Mammary epithelial cell (primary cell): ENCODE measurements at regions of chr3 and their contacts with region 1.

Region 1: GRCh38 chr3:98718521-98719129 is 44.5 kb upstream of the ST3GAL6 start:
- DNase-seq: no peak
- H3K4me3 ChIP-seq: no peak overlapping the region
- H3K27ac ChIP-seq: no peak overlapping the region
- H3K4me1 ChIP-seq: no peaks in the 10 kb centered on the region
- H3K27me3 ChIP-seq: no peaks in the 10 kb centered on the region
- CTCF ChIP-seq: no peak

Region 2: GRCh38 chr3:98259707-98260106 is 458.9 kb before region 1 on chr3:
- CTCF ChIA-PET with region 1: no interaction called
- dilution Hi-C with region 1: no loop called
- in situ Hi-C with region 1: no loop called
- intact Hi-C with region 1: no loop called
- DNase-seq: no peak
- H3K4me3 ChIP-seq: no peak overlapping the region
- H3K27ac ChIP-seq: no peak overlapping the region
- H3K4me1 ChIP-seq: no peaks in the 10 kb centered on the region
- H3K27me3 ChIP-seq: no peaks in the 10 kb centered on the region
- CTCF ChIP-seq: peak; percentile 21 to 40

Region 3: GRCh38 chr3:98359993-98360675 is 358.5 kb before region 1 on chr3:
- CTCF ChIA-PET with region 1: no interaction called
- dilution Hi-C with region 1: no loop called
- in situ Hi-C with region 1: no loop called
- intact Hi-C with region 1: loop called (anchors 5 kb)
- DNase-seq: peak; percentile 65
- H3K4me3 ChIP-seq: no peak overlapping the region
- H3K27ac ChIP-seq: no peak overlapping the region
- H3K4me1 ChIP-seq: peaks cover 4% of the 10 kb centered on the region
- H3K27me3 ChIP-seq: no peaks in the 10 kb centered on the region
- CTCF ChIP-seq: peak; percentile 22 to 43